MCF 10A (cell line): ENCODE measurements at regions of chr14 and their contacts with region 1.

Region 1: GRCh38 chr14:45332360-45332988 is 79.5 kb upstream of the MIS18BP1 start:
- DNase-seq: peak; percentile 50
- H3K4me3 Mint-ChIP-seq: no peak overlapping the region
- H3K27ac Mint-ChIP-seq: no peak overlapping the region
- H3K4me1 Mint-ChIP-seq: peaks cover 11% of the 10 kb centered on the region
- H3K27me3 Mint-ChIP-seq: no peaks in the 10 kb centered on the region
- CTCF ChIP-seq: no peak

Region 2: DNA sequence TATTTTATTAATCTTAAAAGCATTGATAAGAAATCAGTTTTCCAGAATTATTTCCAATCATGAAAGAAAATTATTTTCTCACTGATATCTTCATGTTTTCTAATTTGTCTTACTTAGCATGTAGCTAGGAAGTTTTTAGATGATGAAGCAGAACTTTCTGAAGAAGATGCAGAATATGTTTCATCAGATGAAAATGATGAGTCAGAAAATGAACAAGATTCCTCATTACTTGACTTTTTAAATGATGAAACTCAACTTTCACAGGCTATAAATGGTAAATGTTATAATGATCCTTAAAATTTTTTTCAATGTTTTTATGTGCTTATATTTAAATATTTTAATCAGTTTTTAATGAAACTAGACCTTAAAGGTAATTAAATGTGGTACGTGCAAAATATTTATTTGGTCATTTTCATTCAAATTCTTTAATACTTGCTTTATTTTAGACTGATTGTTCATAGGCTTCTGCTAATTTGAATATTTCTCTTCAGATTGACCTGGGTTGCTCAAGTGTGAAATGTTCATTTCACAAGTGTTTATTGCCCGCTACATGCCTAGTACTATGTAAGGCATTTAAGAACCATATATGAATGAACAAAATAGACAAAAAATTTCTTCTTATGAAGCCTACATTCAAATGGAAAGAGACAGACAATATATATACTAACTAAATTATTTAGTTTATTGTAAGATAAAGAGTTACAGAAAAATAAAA is 147.2 kb before region 1 on chr14:
- CTCF ChIA-PET with region 1: no interaction called
- POLR2A ChIA-PET with region 1: no interaction called
- intact Hi-C with region 1: no loop called
- DNase-seq: no peak
- H3K4me3 Mint-ChIP-seq: no peak overlapping the region
- H3K27ac Mint-ChIP-seq: no peak overlapping the region
- H3K4me1 Mint-ChIP-seq: no peaks in the 10 kb centered on the region
- H3K27me3 Mint-ChIP-seq: no peaks in the 10 kb centered on the region
- CTCF ChIP-seq: no peak

Region 3: DNA sequence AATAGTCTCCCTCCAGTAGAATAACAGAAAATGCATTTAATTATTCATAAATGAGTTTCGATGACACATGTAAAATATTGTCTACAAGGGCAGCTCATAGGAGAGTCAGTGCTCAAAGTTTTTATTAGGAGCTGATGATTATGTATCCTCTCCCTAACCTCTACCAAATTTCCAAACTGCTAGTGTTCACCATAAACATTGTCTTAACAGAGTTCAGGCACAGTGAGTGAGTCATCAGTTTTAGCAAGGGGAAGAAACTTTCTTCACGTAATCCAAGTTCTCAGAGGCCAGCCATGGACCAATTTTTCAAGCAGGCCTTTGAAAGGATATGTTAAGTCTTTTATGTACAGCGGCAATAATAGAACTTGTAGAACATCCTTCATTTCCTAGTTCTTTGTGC is 569.8 kb after region 1 on chr14:
- CTCF ChIA-PET with region 1: no interaction called
- POLR2A ChIA-PET with region 1: no interaction called
- intact Hi-C with region 1: no loop called
- DNase-seq: peak; percentile 42
- H3K4me3 Mint-ChIP-seq: no peak overlapping the region
- H3K27ac Mint-ChIP-seq: peak overlapping the region; percentile 42
- H3K4me1 Mint-ChIP-seq: peaks cover 6% of the 10 kb centered on the region
- H3K27me3 Mint-ChIP-seq: no peaks in the 10 kb centered on the region
- CTCF ChIP-seq: no peak

Region 4: DNA sequence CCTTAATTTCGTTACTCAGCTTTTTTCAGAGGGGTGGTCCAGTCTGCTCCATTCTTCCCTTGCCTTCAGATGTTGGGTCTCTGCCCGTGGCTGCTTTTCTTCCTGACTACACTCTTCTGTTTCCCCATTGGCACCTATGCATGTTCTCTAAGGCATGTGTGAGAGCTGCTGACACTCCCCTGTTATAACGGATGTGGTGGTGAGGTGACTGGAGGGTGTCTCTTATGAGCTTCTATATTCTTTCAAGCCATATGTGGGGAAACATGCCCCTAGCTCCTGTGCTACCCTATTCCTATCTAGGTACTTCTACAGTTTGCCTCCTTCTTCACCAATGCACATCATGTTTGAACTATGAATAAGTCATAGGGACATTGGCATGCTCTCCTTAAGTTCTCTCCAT is 675.9 kb after region 1 on chr14:
- CTCF ChIA-PET with region 1: no interaction called
- POLR2A ChIA-PET with region 1: no interaction called
- intact Hi-C with region 1: loop called (anchors 5 kb)
- DNase-seq: no peak
- H3K4me3 Mint-ChIP-seq: no peak overlapping the region
- H3K27ac Mint-ChIP-seq: no peak overlapping the region
- H3K4me1 Mint-ChIP-seq: no peaks in the 10 kb centered on the region
- H3K27me3 Mint-ChIP-seq: no peaks in the 10 kb centered on the region
- CTCF ChIP-seq: no peak